Activated CD8-positive, alpha-beta T cell treated with anti-CD3 and anti-CD28 coated beads for 36 hours (primary cell): ENCODE measurements at regions of chr13 and their contacts with region 1.

Region 1: GRCh38 chr13:75694722-75695121 is 58.6 kb downstream of the LMO7 start:
- DNase-seq: no peak
- ATAC-seq: no peak
- H3K4me3 Mint-ChIP-seq: no peak overlapping the region
- H3K27ac Mint-ChIP-seq: no peak overlapping the region
- H3K4me1 Mint-ChIP-seq: peaks cover 8% of the 10 kb centered on the region
- H3K27me3 Mint-ChIP-seq: no peaks in the 10 kb centered on the region
- CTCF ChIP-seq: no peak

Region 2: DNA sequence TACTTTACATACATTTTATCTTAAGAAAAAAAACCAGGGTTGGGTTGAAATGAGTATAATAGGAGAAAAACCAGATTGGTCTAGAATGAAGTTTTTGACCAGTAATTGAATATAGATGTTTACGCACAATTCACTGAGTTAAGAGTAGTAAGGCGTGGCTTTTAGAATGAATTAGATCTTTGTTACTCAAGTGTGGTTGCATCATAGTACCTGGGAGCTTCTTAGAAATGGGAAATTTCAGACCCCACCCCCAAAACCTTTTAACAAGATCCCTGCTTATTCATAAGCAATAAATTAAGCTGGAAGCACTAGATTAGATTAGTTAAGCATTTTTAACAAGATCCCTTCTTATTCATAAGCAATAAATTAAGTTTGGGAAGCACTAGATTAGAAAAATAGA is 87.3 kb before region 1 on chr13:
- CTCF ChIA-PET with region 1: no interaction called
- POLR2A ChIA-PET with region 1: no interaction called
- intact Hi-C with region 1: no loop called
- DNase-seq: no peak
- ATAC-seq: no peak
- H3K4me3 Mint-ChIP-seq: no peak overlapping the region
- H3K27ac Mint-ChIP-seq: no peak overlapping the region
- H3K4me1 Mint-ChIP-seq: no peaks in the 10 kb centered on the region
- H3K27me3 Mint-ChIP-seq: no peaks in the 10 kb centered on the region
- CTCF ChIP-seq: no peak

Region 3: GRCh38 chr13:75675421-75675820 is 19.3 kb before region 1 on chr13:
- CTCF ChIA-PET with region 1: interaction called, 51 read pairs
- POLR2A ChIA-PET with region 1: no interaction called
- intact Hi-C with region 1: no loop called
- DNase-seq: no peak
- ATAC-seq: no peak
- H3K4me3 Mint-ChIP-seq: no peak overlapping the region
- H3K27ac Mint-ChIP-seq: no peak overlapping the region
- H3K4me1 Mint-ChIP-seq: no peaks in the 10 kb centered on the region
- H3K27me3 Mint-ChIP-seq: no peaks in the 10 kb centered on the region
- CTCF ChIP-seq: no peak

Region 4: GRCh38 chr13:75724752-75725504 is 30.2 kb after region 1 on chr13:
- CTCF ChIA-PET with region 1: interaction called, 13 read pairs
- POLR2A ChIA-PET with region 1: no interaction called
- intact Hi-C with region 1: no loop called
- DNase-seq: no peak
- ATAC-seq: no peak
- H3K4me3 Mint-ChIP-seq: no peak overlapping the region
- H3K27ac Mint-ChIP-seq: no peak overlapping the region
- H3K4me1 Mint-ChIP-seq: no peaks in the 10 kb centered on the region
- H3K27me3 Mint-ChIP-seq: no peaks in the 10 kb centered on the region
- CTCF ChIP-seq: no peak

Region 5: DNA sequence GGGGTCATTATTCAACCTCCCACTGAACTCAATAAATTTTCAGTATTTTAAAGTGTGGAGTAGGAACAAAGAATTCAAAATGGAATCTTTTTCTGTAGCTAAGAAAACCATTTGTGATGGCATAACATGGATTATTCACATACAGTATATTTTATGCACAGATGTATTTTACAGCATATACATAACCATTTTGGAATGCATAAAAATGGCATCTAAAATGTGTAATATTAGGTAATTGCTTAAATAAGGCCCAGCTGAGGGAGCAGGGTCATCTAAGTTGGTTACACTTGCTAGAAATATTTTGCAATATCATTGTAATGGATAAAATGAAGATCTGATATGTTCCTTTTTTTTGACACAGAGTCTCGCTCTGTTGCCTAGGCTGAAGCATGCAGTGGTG is 88.3 kb after region 1 on chr13:
- CTCF ChIA-PET with region 1: interaction called, 14 read pairs
- POLR2A ChIA-PET with region 1: no interaction called
- intact Hi-C with region 1: no loop called
- DNase-seq: no peak
- ATAC-seq: no peak
- H3K4me3 Mint-ChIP-seq: no peak overlapping the region
- H3K27ac Mint-ChIP-seq: no peak overlapping the region
- H3K4me1 Mint-ChIP-seq: peaks cover 10% of the 10 kb centered on the region
- H3K27me3 Mint-ChIP-seq: no peaks in the 10 kb centered on the region
- CTCF ChIP-seq: no peak

Region 6: DNA sequence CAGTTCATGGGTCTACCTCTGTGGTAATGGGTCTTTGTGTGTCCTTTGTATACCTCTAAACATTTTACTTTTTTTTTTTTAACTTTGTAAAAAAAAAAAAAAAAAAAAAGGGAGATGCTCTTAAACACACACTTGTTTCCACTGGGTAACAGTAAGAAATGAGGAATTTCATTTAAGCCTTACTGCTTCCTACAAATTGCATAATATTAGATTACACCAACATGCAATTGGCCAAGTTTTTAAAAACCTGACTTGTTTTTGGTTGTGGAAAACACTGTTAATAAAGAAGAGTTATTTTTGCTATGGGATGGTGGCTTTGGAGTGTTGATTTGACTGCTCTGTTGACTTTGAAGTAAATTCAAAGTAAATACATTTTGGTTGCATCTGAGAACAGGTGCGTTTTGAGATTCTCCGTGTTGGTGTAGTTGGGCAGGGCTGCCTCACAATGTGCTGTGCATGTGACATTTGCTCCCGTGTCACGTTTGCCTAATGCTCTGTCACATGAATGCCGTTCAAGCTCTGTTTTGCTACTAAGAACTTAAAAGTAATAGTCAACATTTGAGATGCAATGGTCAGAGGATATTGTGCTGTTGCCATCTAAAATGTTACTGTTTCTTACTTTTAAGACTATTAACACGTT is 143.8 kb after region 1 on chr13:
- CTCF ChIA-PET with region 1: interaction called, 24 read pairs
- POLR2A ChIA-PET with region 1: no interaction called
- intact Hi-C with region 1: no loop called
- DNase-seq: no peak
- ATAC-seq: no peak
- H3K4me3 Mint-ChIP-seq: no peak overlapping the region
- H3K27ac Mint-ChIP-seq: no peak overlapping the region
- H3K4me1 Mint-ChIP-seq: peaks cover 11% of the 10 kb centered on the region
- H3K27me3 Mint-ChIP-seq: no peaks in the 10 kb centered on the region
- CTCF ChIP-seq: no peak

Region 7: DNA sequence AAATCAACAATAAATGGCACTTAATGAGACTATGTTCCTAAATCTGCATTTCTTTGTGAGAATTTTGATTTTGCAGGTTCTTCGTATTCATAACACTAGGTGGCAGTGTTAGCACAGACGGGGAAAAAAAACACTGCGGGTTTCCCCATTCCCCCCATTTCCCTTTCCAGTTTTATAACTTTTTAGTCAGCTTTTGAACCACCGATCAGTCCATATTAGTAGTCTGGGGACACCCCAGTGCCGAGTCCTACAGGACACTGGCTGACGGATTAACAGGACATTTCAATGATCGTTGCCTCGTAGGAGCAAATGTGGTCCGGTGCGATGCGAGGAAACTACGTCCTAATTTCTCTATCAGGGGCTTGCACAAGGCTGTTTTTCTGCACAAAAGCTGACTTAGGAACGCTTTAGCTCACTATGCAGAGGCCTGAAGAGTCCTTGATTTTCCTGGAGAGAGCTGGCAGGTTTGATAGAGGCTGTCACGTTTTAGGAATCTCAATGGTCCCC is 175.7 kb after region 1 on chr13:
- CTCF ChIA-PET with region 1: interaction called, 94 read pairs
- POLR2A ChIA-PET with region 1: no interaction called
- intact Hi-C with region 1: loop called (anchors 5 kb)
- DNase-seq: peak; percentile 6
- ATAC-seq: peak; percentile 47
- H3K4me3 Mint-ChIP-seq: peak overlapping the region; percentile 54
- H3K27ac Mint-ChIP-seq: peak overlapping the region; percentile 27
- H3K4me1 Mint-ChIP-seq: peaks cover 6% of the 10 kb centered on the region
- H3K27me3 Mint-ChIP-seq: peaks cover 1% of the 10 kb centered on the region
- CTCF ChIP-seq: peak; percentile 87

Region 8: DNA sequence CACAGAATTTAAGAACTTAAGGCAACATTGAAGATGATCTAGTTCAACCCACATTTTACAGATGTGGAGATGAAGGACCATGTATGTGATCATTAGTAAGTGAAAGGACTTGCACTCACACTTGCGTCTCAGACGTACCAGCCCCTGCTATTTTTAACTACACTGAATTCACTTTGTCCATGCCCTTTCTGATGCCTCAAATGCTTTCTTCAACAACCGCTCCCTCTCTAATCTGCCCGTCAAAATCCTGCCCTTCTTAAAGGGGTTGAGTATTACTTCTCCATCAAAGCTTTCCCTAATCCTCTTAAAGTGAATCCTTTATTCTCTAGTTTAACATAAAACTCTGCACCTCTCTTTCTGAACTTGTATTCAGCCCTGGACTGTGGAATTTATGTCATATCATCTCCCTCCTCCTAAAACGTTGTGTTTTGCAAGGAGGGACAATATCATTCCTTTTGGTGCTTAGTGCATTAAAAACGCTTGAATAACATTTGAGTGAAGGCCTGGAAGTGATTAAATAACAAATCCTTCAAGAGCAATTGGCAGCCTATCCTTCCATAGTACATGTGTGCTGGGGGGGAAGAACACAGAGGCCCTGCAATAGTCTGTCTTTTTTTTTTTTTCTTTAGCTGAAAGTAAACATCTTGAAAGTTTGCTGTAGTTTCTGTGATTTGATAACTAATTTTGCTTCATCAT is 434.7 kb after region 1 on chr13:
- CTCF ChIA-PET with region 1: no interaction called
- POLR2A ChIA-PET with region 1: no interaction called
- intact Hi-C with region 1: no loop called
- DNase-seq: no peak
- ATAC-seq: no peak
- H3K4me3 Mint-ChIP-seq: no peak overlapping the region
- H3K27ac Mint-ChIP-seq: no peak overlapping the region
- H3K4me1 Mint-ChIP-seq: no peaks in the 10 kb centered on the region
- H3K27me3 Mint-ChIP-seq: peaks cover 3% of the 10 kb centered on the region
- CTCF ChIP-seq: no peak

Region 9: GRCh38 chr13:76473552-76474134 is 778.9 kb after region 1 on chr13:
- CTCF ChIA-PET with region 1: interaction called, 14 read pairs
- POLR2A ChIA-PET with region 1: no interaction called
- intact Hi-C with region 1: loop called (anchors 5 kb)
- DNase-seq: peak; percentile 84
- ATAC-seq: peak; percentile 97
- H3K4me3 Mint-ChIP-seq: no peak overlapping the region
- H3K27ac Mint-ChIP-seq: no peak overlapping the region
- H3K4me1 Mint-ChIP-seq: no peaks in the 10 kb centered on the region
- H3K27me3 Mint-ChIP-seq: peaks cover 7% of the 10 kb centered on the region
- CTCF ChIP-seq: peak; percentile 82